PC-9 (cell line): ENCODE measurements at regions of chr11 and their contacts with region 1.

Region 1: DNA sequence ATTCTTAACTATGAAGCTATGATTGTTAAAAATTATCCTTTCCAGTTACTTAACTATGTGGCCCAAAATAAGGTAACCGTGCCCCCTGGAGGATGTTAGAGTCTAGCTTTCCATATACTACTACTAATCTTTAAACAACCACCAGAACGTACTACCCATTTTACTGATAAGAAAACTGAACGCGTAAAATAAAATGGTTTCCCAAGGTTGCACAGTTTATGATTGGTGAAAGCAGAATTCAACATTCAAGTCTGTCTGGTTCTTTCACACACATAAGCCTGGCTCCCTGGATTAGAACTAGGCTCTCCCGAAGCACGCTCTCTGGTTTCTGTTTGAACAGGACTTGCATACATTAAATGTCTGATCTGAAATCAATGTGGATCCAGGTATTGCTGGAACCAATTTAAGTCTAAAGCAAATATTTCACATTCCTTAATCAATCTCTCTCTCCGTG is 437.9 kb upstream of the CCDC90B start:
- DNase-seq: peak; percentile 10 to 45
- H3K4me3 ChIP-seq: peak overlapping the region; percentile 29; the same call in 1 of the 2 replicates
- H3K27ac ChIP-seq: no peak overlapping the region
- H3K4me1 ChIP-seq: no peaks in the 10 kb centered on the region
- H3K27me3 ChIP-seq: peaks cover 4% of the 10 kb centered on the region; the same call in 1 of the 2 replicates
- CTCF ChIP-seq: peak; percentile 41; the same call in 1 of the 2 replicates

Region 2: GRCh38 chr11:82733444-82734119 is 990.5 kb before region 1 on chr11 and contains the start of gene FAM181B:
- CTCF ChIA-PET with region 1: no interaction called
- POLR2A ChIA-PET with region 1: no interaction called
- intact Hi-C with region 1: no loop called
- DNase-seq: no peak
- H3K4me3 ChIP-seq: no peak within 1 kb of the TSS
- H3K27ac ChIP-seq: no peak within 1 kb of the TSS
- H3K4me1 ChIP-seq: no peaks in the 10 kb centered on the region
- H3K27me3 ChIP-seq: no peaks in the 10 kb centered on the region
- CTCF ChIP-seq: no peak
- total RNA-seq, gene FAM181B: not detected in 2 replicates

Region 3: DNA sequence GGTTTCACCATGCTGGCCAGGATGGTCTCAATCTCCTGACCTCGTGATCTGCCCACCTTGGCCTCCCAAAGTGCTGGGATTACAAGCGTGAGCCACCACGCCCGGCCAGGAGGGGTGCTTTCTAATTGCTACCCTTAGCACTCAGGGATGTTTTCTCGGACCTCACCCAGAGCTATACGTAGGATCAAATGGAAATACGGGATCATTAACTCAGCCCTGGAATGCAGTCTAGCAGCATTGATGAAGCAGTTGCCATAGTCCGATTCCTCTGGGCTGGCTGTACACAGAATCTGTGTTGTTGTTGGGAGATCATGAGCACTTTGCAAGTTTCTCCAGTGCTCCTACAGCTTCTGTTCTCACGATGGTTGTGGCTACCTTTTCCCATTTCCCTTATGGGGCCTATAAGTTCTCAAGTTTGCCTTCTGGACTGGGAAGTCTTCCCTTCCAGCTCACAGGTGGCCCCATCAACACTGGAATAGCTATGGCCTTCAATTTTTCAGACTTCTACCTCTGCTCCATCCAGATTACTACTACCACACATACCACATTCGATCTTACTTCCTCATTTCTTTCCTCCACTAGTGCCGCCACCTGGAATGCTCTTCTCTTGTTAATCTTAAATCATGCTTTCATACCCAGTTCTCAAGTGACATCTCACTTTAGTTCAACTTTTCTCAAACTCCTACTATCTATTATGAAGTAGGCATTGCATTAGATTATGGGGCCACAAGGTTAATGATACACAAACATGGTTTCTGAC is 583.2 kb before region 1 on chr11:
- CTCF ChIA-PET with region 1: interaction called, 14 read pairs
- POLR2A ChIA-PET with region 1: no interaction called
- intact Hi-C with region 1: no loop called
- DNase-seq: no peak
- H3K4me3 ChIP-seq: no peak overlapping the region
- H3K27ac ChIP-seq: no peak overlapping the region
- H3K4me1 ChIP-seq: no peaks in the 10 kb centered on the region
- H3K27me3 ChIP-seq: no peaks in the 10 kb centered on the region
- CTCF ChIP-seq: no peak

Region 4: GRCh38 chr11:83292709-83293456 is 431.2 kb before region 1 on chr11:
- CTCF ChIA-PET with region 1: interaction called, 10 read pairs
- POLR2A ChIA-PET with region 1: no interaction called
- intact Hi-C with region 1: loop called (anchors 2 kb)
- DNase-seq: peak in 1 of 2 experiments; percentile 14
- H3K4me3 ChIP-seq: no peak overlapping the region
- H3K27ac ChIP-seq: no peak overlapping the region
- H3K4me1 ChIP-seq: no peaks in the 10 kb centered on the region
- H3K27me3 ChIP-seq: no peaks in the 10 kb centered on the region
- CTCF ChIP-seq: peak; percentile 83

Region 5: DNA sequence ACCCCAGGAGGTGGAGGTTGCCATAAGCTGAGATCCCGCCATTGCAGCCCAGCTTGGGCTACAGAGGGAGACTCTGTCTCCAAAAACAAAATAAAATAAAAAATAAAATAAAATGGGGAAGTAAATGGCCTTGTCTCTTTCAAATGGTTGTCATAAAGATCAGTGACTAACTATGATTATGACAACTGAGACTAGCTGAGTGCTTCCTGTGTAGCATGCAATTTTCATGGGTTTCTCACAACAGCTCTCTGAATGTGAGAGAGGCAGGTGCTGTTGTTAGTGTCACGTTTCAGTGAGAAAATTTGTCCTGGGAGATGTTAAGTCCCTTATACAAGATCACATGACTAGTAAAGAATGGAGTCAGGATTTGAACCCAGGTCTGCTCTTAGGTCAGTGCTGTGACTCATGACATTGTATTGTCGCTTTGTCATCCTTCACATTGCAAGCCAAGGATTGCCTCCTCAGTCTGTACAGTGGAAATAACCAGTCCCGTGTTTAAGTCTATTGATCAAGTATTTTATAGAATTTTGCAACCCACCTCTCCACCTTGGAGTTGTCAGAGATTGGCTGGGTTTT is 274.6 kb before region 1 on chr11:
- CTCF ChIA-PET with region 1: no interaction called
- POLR2A ChIA-PET with region 1: no interaction called
- intact Hi-C with region 1: loop called (anchors 10 kb)
- DNase-seq: no peak
- H3K4me3 ChIP-seq: no peak overlapping the region
- H3K27ac ChIP-seq: no peak overlapping the region
- H3K4me1 ChIP-seq: no peaks in the 10 kb centered on the region
- H3K27me3 ChIP-seq: no peaks in the 10 kb centered on the region
- CTCF ChIP-seq: no peak

Region 6: DNA sequence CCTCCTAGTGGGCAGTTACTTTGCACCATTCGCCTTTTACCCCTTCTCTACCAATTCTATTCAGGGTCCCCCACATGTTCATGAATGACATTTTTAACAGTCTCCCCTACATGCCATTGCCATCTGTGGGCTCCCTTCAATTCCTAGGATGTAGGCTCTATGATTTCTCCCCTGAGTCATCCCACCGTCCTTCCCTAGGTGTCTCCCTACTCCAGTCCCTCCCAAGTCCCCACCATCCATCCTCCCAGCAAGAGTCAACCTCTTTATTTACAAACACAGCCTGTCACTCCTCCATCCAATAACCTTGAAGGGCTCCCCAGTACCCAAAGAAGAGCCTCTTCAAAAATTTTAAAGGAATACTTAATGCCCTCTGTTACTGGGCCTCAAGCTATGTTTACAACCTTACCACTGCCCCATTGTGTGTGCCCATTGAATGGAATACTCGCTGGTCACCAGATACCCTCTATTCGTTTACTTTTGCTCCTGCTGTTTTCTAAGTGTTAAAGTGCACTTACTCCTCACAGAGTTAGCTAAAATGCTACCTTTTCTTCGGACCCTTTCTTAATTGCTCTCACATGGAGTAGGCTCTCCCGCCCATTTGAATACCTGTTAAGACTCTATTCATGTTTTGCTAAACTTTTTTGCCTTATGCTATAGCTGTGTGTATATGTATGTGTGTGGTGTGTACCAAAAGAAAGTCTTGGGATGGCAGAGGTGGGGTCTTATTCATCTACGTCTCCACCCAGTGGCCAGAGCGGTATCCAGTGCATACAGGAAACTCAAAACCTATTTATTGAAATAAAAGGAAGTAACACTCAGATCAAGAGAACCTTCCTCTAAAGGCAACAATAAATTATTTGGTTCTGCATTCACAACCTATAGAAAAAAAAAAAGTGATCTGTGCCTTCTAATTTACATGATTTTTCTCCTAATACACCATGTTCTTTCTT is 202.1 kb before region 1 on chr11:
- CTCF ChIA-PET with region 1: interaction called, 3 read pairs
- POLR2A ChIA-PET with region 1: no interaction called
- intact Hi-C with region 1: loop called (anchors 5 kb)
- DNase-seq: peak in 1 of 2 experiments; percentile 20
- H3K4me3 ChIP-seq: no peak overlapping the region
- H3K27ac ChIP-seq: no peak overlapping the region
- H3K4me1 ChIP-seq: no peaks in the 10 kb centered on the region
- H3K27me3 ChIP-seq: no peaks in the 10 kb centered on the region
- CTCF ChIP-seq: no peak; the same call in 1 of the 2 replicates